MCF 10A (cell line): ENCODE measurements at regions of chr3 and their contacts with region 1.

Region 1: GRCh38 chr3:33787328-33788009 is 11.0 kb upstream of the PDCD6IP start:
- DNase-seq: peak; percentile 71
- H3K4me3 Mint-ChIP-seq: no peak overlapping the region
- H3K27ac Mint-ChIP-seq: no peak overlapping the region
- H3K4me1 Mint-ChIP-seq: peaks cover 19% of the 10 kb centered on the region
- H3K27me3 Mint-ChIP-seq: no peaks in the 10 kb centered on the region
- CTCF ChIP-seq: peak; percentile 77

Region 2: GRCh38 chr3:32947789-32948238 is 839.7 kb before region 1 on chr3:
- CTCF ChIA-PET with region 1: no interaction called
- POLR2A ChIA-PET with region 1: no interaction called
- intact Hi-C with region 1: loop called (anchors 1 kb)
- DNase-seq: peak; percentile 91
- H3K4me3 Mint-ChIP-seq: no peak overlapping the region
- H3K27ac Mint-ChIP-seq: no peak overlapping the region
- H3K4me1 Mint-ChIP-seq: no peaks in the 10 kb centered on the region
- H3K27me3 Mint-ChIP-seq: no peaks in the 10 kb centered on the region
- CTCF ChIP-seq: peak; percentile 61

Region 3: GRCh38 chr3:33440323-33441232 is 346.9 kb before region 1 on chr3 and contains the start of gene UBP1:
- CTCF ChIA-PET with region 1: interaction called, 6 read pairs
- POLR2A ChIA-PET with region 1: interaction called, 6 read pairs
- intact Hi-C with region 1: loop called (anchors 10 kb)
- DNase-seq: peak; percentile 100
- H3K4me3 Mint-ChIP-seq: peak within 1 kb of the TSS; percentile 99
- H3K27ac Mint-ChIP-seq: peak within 1 kb of the TSS; percentile 99
- H3K4me1 Mint-ChIP-seq: peaks cover 14% of the 10 kb centered on the region
- H3K27me3 Mint-ChIP-seq: no peaks in the 10 kb centered on the region
- CTCF ChIP-seq: no peak
- total RNA-seq, gene UBP1: 55.6 and 72.6 TPM in 2 replicates

Region 4: DNA sequence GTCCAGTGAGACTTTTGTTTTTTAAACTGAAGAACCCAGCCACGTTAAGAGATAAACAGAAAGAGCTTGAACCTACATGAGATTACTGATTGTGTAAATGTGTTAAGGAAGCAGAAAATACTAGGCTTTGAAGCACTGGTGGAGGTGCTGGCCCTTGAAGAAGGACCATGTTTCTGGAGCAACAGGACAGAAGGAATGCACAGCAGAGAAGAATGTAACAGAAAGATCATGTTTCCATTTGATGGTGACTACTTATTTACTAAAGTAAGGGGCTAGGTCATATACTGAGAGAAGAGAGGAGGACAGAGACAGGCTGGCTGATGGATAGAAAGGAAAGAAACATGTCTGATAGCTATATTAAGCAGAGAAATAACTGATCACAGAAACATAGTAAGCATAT is 158.2 kb before region 1 on chr3:
- CTCF ChIA-PET with region 1: interaction called, 16 read pairs
- POLR2A ChIA-PET with region 1: interaction called, 5 read pairs
- intact Hi-C with region 1: no loop called
- DNase-seq: no peak
- H3K4me3 Mint-ChIP-seq: no peak overlapping the region
- H3K27ac Mint-ChIP-seq: no peak overlapping the region
- H3K4me1 Mint-ChIP-seq: no peaks in the 10 kb centered on the region
- H3K27me3 Mint-ChIP-seq: no peaks in the 10 kb centered on the region
- CTCF ChIP-seq: no peak

Region 5: DNA sequence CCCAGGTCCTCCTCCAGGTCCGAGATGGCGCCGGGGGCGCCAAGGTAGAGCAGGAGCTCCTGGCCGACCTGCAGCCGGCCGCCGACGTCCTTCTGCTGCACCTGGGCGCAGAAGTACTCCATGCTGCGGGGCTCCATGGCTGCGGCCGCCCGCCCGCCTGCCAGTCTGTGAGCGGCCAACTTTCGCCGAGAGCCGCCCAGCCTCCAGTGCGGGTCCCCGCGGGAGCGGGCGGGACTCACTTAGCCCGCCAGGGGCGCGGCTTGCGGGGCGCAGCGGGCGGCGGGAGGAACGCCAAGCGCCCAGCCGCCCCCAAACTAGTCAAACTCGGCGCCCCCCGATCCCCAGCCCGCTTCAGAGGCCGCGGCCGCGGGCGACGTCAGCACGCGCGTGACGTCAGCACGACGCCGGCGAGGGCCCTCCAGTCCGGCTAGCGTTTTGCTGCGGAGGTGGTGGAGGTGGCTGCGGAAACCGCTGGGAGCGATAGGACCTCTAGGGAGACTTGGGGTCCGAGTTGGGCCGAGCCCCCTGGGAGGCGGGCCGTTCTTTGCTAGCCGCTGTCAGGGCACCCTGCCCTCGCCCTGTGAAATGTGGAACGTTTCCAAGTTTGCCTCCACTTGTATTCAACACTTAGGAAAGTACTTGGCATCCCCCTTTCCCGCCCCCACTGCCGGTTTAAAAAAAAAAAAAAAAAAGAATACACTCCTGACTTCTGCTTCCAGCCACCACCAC is 69.4 kb before region 1 on chr3 and contains the start of gene CLASP2:
- CTCF ChIA-PET with region 1: interaction called, 7 read pairs
- POLR2A ChIA-PET with region 1: interaction called, 3 read pairs
- intact Hi-C with region 1: loop called (anchors 1 kb)
- DNase-seq: peak; percentile 82
- H3K4me3 Mint-ChIP-seq: no peak within 1 kb of the TSS
- H3K27ac Mint-ChIP-seq: no peak within 1 kb of the TSS
- H3K4me1 Mint-ChIP-seq: no peaks in the 10 kb centered on the region
- H3K27me3 Mint-ChIP-seq: no peaks in the 10 kb centered on the region
- CTCF ChIP-seq: no peak
- total RNA-seq, gene CLASP2: 57.2 and 58.9 TPM in 2 replicates

Region 6: GRCh38 chr3:33798411-33799201 is 11.1 kb after region 1 on chr3 and contains the start of gene PDCD6IP:
- CTCF ChIA-PET with region 1: interaction called, 6 read pairs
- POLR2A ChIA-PET with region 1: interaction called, 32 read pairs
- intact Hi-C with region 1: no loop called
- DNase-seq: peak; percentile 92
- H3K4me3 Mint-ChIP-seq: peak within 1 kb of the TSS; percentile 90
- H3K27ac Mint-ChIP-seq: peak within 1 kb of the TSS; percentile 93
- H3K4me1 Mint-ChIP-seq: peaks cover 41% of the 10 kb centered on the region
- H3K27me3 Mint-ChIP-seq: no peaks in the 10 kb centered on the region
- CTCF ChIP-seq: no peak
- total RNA-seq, gene PDCD6IP: 286 and 304 TPM in 2 replicates

Region 7: GRCh38 chr3:33926998-33927605 is 139.6 kb after region 1 on chr3:
- CTCF ChIA-PET with region 1: no interaction called
- POLR2A ChIA-PET with region 1: no interaction called
- intact Hi-C with region 1: no loop called
- DNase-seq: no peak
- H3K4me3 Mint-ChIP-seq: no peak overlapping the region
- H3K27ac Mint-ChIP-seq: no peak overlapping the region
- H3K4me1 Mint-ChIP-seq: no peaks in the 10 kb centered on the region
- H3K27me3 Mint-ChIP-seq: peaks cover 27% of the 10 kb centered on the region
- CTCF ChIP-seq: no peak